Motor neuron (in vitro differentiated cells): ENCODE measurements at regions of chr9 and their contacts with region 1.

Region 1: GRCh38 chr9:21812946-21813568 is 10.6 kb downstream of the MTAP start:
- ATAC-seq: peak; percentile 32 to 78 (median 50)
- H3K4me3 ChIP-seq: no peak overlapping the region
- H3K27ac ChIP-seq: no peak overlapping the region
- H3K4me1 ChIP-seq: peaks cover 0 to 2% of the 10 kb centered on the region in 2 donors

Region 2: DNA sequence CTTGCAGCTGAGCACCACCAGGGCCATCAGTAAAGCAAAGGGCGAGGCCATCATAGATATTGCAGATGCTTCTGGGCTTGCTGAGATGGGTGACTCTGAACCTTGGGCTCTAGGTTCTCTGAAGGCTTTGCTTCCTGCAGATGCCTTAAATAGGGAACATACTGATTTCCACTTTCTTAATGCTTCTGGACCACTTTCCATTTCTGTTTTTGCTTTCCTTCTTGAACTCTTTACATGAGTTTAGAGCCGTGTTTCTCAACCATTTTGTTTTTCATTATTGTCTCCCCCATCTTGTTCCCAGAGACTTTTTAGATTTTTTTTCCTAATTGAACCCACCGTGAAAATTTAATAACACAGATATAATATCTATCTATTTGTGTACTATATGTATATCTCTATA is 445.1 kb before region 1 on chr9 and contains the start of gene IFNA13:
- in situ Hi-C with region 1: no loop called
- ATAC-seq: no peak
- H3K4me3 ChIP-seq: no peak within 1 kb of the TSS
- H3K27ac ChIP-seq: no peak within 1 kb of the TSS
- H3K4me1 ChIP-seq: no peaks in the 10 kb centered on the region
- total RNA-seq, gene IFNA13: 0.23 to 0.24 TPM in 2 of 8 experiments, not detected in the others

Region 3: GRCh38 chr9:22238809-22239684 is 426.0 kb after region 1 on chr9:
- in situ Hi-C with region 1: loop called in 4 of 9 experiments (anchors 10 to 25 kb)
- ATAC-seq: peak in 3 of 8 experiments; percentile 41 to 49 (median 44)
- H3K4me3 ChIP-seq: no peak overlapping the region
- H3K27ac ChIP-seq: no peak overlapping the region
- H3K4me1 ChIP-seq: no peaks in the 10 kb centered on the region